ENCODE measurements at regions of chr19 and their contacts with region 1.

Region 1: DNA sequence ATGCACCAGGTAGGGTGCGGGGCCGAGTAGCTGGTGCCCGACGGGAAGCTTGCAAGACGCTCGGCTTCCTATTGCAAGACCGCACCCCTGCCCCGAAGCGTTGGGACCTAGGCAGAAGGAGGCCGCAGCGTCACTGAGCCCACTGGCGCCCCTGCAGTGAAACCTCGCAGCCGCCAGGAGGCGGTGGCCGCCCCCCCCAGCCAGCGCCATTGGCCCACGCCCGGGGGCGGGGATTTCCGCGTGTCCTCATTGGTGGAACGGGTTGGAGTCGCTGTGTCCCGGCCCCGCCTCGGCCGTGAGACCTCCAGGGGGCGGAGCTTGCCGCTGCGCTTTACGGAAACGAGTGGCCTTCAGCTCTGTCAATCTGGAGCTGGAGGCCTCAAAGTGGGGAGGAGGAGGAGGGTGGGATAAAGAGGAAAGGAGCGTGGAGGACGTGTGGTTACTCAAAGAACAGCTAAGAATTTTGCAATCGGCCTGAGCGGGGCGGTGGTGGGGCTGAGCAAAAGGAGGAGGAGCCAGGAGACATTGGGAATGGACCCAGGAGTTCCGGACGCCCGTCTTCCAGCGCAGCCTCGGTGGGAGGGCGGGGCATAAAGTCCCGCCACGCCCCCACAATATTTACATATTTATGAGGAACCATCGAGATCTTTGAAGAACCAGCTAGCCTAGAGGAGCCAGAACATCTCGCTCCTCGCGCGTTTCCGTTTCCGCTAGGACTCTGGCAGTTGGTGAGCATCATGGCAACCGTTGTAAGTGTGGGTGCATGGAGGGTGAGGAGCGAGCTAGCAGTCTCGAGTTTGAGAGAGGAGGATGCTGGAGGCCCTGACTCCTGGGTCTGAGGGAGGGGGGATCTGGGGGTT is at the starts of genes GYS1 and RUVBL2:
- DNase-seq: peak; percentile 100
- ATAC-seq: peak; percentile 95 to 96
- total RNA-seq, gene GYS1: 66.4 to 95.7 TPM
- total RNA-seq, gene RUVBL2: 39.3 to 50.0 TPM

Region 2: GRCh38 chr19:49073514-49074378 is 80.3 kb after region 1 on chr19:
- intact Hi-C with region 1: loop called in 1 of 2 experiments (anchors 10 kb)
- DNase-seq: no peak
- ATAC-seq: peak; percentile 33 to 54

Region 3: DNA sequence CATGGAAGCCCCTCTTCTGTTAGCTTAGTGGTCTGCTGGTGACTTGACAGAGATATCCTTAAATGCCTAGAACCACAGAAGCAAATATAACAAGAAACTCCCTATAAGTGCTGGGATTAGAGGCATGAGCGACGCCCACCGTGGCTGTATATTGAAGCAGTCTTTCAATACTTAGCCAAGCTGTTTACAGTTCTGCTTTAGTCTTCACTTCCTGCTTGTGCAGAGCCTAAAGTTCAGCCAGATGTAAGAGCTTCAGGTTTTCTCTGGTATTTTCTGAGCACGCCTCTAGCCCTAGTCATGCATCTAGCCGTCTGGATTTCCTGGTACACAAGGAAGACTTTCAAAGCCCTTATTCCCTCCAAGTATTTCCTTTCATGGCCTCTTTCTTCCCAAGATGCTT is 192.7 kb after region 1 on chr19:
- intact Hi-C with region 1: no loop called
- DNase-seq: no peak
- ATAC-seq: no peak